ENCODE measurements at regions of chr22 and their contacts with region 1.

Region 1: GRCh38 chr22:25027959-25028840 is 75.7 kb downstream of the KIAA1671 start:
- DNase-seq: peak; percentile 31 to 59
- ATAC-seq: peak; percentile 85 to 96; a peak in 5 of 6 replicates
- H3K4me3 ChIP-seq: no peak overlapping the region
- H3K27ac ChIP-seq: peak overlapping the region in 1 of 2 experiments; percentile 69; a peak in 2 of 6 replicates
- H3K4me1 ChIP-seq: peaks cover 17% of the 10 kb centered on the region
- CTCF ChIP-seq: peak; percentile 54
- EP300 ChIP-seq: no peak
- POLR2A ChIP-seq: no peak
- RAD21 ChIP-seq: peak; percentile 74 to 80

Region 2: GRCh38 chr22:25013607-25014006 is 14.6 kb before region 1 on chr22:
- CTCF ChIA-PET with region 1: interaction called, 10 read pairs
- POLR2A ChIA-PET with region 1: no interaction called
- DNase-seq: no peak
- ATAC-seq: no peak
- H3K4me3 ChIP-seq: no peak overlapping the region
- H3K27ac ChIP-seq: no peak overlapping the region
- H3K4me1 ChIP-seq: peaks cover 5% of the 10 kb centered on the region; the same call in 1 of the 3 replicates
- CTCF ChIP-seq: no peak
- EP300 ChIP-seq: no peak
- POLR2A ChIP-seq: no peak
- RAD21 ChIP-seq: no peak

Region 3: GRCh38 chr22:25048659-25049647 is 20.8 kb after region 1 on chr22:
- CTCF ChIA-PET with region 1: interaction called, 60 read pairs
- POLR2A ChIA-PET with region 1: no interaction called
- DNase-seq: peak; percentile 64
- ATAC-seq: peak; percentile 92 to 96
- H3K4me3 ChIP-seq: no peak overlapping the region
- H3K27ac ChIP-seq: no peak overlapping the region
- H3K4me1 ChIP-seq: peaks cover 4% of the 10 kb centered on the region; the same call in 1 of the 3 replicates
- CTCF ChIP-seq: peak; percentile 75
- EP300 ChIP-seq: no peak
- POLR2A ChIP-seq: no peak
- RAD21 ChIP-seq: peak; percentile 80 to 86